ENCODE measurements at regions of chr7 and their contacts with region 1.

Region 1: GRCh38 chr7:105876091-105876963 is at the start of gene ATXN7L1:
- DNase-seq: peak; percentile 88
- ATAC-seq: peak; percentile 92
- H3K4me3 ChIP-seq: peak within 1 kb of the TSS; percentile 88 to 98
- H3K27ac ChIP-seq: peak within 1 kb of the TSS; percentile 91
- H3K4me1 ChIP-seq: peaks cover 27% of the 10 kb centered on the region
- H3K27me3 ChIP-seq: no peaks in the 10 kb centered on the region
- CTCF ChIP-seq: peak; percentile 98
- total RNA-seq, gene ATXN7L1: 10.8 TPM

Region 2: GRCh38 chr7:105210721-105211205 is 665.6 kb before region 1 on chr7:
- CTCF ChIA-PET with region 1: no interaction called
- POLR2A ChIA-PET with region 1: no interaction called
- in situ Hi-C with region 1: no loop called
- intact Hi-C with region 1: no loop called
- DNase-seq: no peak
- ATAC-seq: peak; percentile 51
- H3K4me3 ChIP-seq: no peak overlapping the region
- H3K27ac ChIP-seq: no peak overlapping the region
- H3K4me1 ChIP-seq: no peaks in the 10 kb centered on the region; the same call in 1 of the 2 replicates
- H3K27me3 ChIP-seq: no peaks in the 10 kb centered on the region
- CTCF ChIP-seq: no peak

Region 3: GRCh38 chr7:105602325-105603305 is 273.7 kb before region 1 on chr7:
- CTCF ChIA-PET with region 1: no interaction called
- POLR2A ChIA-PET with region 1: interaction called, 10 read pairs
- in situ Hi-C with region 1: no loop called
- intact Hi-C with region 1: no loop called
- DNase-seq: no peak
- ATAC-seq: no peak
- H3K4me3 ChIP-seq: no peak overlapping the region
- H3K27ac ChIP-seq: no peak overlapping the region
- H3K4me1 ChIP-seq: no peaks in the 10 kb centered on the region
- H3K27me3 ChIP-seq: no peaks in the 10 kb centered on the region
- CTCF ChIP-seq: no peak

Region 4: GRCh38 chr7:105924945-105925344 is 48.6 kb after region 1 on chr7:
- CTCF ChIA-PET with region 1: no interaction called
- POLR2A ChIA-PET with region 1: no interaction called
- in situ Hi-C with region 1: no loop called
- intact Hi-C with region 1: no loop called
- DNase-seq: no peak
- ATAC-seq: no peak
- H3K4me3 ChIP-seq: no peak overlapping the region
- H3K27ac ChIP-seq: no peak overlapping the region
- H3K4me1 ChIP-seq: no peaks in the 10 kb centered on the region
- H3K27me3 ChIP-seq: no peaks in the 10 kb centered on the region
- CTCF ChIP-seq: no peak

Region 5: DNA sequence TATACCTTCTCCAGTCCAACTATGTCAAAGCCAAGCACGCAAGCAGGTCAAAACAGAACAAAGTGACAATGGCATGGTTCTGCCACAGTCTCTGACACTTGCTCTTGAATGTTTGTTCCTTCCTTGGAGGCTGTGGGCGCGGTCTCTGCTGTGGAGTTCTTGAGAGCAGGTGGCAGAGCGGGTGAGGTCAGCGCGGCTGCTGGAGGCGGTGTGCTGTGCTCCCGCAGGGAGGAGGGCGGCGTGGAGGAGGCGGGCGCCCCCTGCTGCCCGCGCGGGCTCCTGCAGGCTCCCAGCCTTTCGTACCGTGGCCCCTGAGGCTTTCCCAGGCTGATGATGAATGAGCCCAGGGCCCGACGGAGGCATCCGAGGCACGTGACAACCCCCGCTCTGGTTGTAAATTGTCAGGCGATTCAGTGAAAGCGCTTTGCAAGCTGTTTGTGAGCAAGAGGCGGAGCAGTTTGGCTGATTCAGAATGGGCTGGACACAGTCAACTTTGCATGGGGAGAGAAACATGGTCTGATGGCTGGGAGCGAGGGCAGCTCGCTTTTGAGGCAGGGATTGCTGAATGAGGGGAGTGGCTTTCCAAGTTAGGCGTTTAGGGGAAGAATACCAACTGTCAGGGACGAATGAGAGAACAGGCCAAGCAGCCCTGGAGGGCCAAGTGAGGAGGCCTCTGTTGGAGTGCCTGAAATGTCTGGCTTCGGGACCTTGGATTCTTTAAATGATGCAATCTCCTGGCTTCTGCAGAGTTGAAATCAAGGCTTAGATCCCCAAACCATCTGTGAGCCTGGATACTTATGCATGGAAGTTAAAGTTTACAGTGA is 133.3 kb after region 1 on chr7:
- CTCF ChIA-PET with region 1: no interaction called
- POLR2A ChIA-PET with region 1: no interaction called
- in situ Hi-C with region 1: no loop called
- intact Hi-C with region 1: loop called (anchors 5 kb)
- DNase-seq: peak; percentile 35
- ATAC-seq: peak; percentile 98
- H3K4me3 ChIP-seq: peak overlapping the region in 1 of 2 experiments; percentile 19; a peak in 2 of 4 replicates
- H3K27ac ChIP-seq: no peak overlapping the region
- H3K4me1 ChIP-seq: no peaks in the 10 kb centered on the region
- H3K27me3 ChIP-seq: no peaks in the 10 kb centered on the region
- CTCF ChIP-seq: peak; percentile 97

Region 6: GRCh38 chr7:106041140-106041717 is 164.9 kb after region 1 on chr7:
- CTCF ChIA-PET with region 1: interaction called, 9 read pairs
- POLR2A ChIA-PET with region 1: interaction called, 6 read pairs
- in situ Hi-C with region 1: no loop called
- intact Hi-C with region 1: loop called (anchors 10 kb)
- DNase-seq: peak; percentile 43
- ATAC-seq: peak; percentile 71
- H3K4me3 ChIP-seq: no peak overlapping the region
- H3K27ac ChIP-seq: no peak overlapping the region
- H3K4me1 ChIP-seq: no peaks in the 10 kb centered on the region; the same call in 1 of the 2 replicates
- H3K27me3 ChIP-seq: no peaks in the 10 kb centered on the region; the same call in 1 of the 2 replicates
- CTCF ChIP-seq: peak; percentile 87

Measured in Panc1 (cell line).